Natural killer cell (primary cell): ENCODE measurements at regions of chr9 and their contacts with region 1.

Region 1: DNA sequence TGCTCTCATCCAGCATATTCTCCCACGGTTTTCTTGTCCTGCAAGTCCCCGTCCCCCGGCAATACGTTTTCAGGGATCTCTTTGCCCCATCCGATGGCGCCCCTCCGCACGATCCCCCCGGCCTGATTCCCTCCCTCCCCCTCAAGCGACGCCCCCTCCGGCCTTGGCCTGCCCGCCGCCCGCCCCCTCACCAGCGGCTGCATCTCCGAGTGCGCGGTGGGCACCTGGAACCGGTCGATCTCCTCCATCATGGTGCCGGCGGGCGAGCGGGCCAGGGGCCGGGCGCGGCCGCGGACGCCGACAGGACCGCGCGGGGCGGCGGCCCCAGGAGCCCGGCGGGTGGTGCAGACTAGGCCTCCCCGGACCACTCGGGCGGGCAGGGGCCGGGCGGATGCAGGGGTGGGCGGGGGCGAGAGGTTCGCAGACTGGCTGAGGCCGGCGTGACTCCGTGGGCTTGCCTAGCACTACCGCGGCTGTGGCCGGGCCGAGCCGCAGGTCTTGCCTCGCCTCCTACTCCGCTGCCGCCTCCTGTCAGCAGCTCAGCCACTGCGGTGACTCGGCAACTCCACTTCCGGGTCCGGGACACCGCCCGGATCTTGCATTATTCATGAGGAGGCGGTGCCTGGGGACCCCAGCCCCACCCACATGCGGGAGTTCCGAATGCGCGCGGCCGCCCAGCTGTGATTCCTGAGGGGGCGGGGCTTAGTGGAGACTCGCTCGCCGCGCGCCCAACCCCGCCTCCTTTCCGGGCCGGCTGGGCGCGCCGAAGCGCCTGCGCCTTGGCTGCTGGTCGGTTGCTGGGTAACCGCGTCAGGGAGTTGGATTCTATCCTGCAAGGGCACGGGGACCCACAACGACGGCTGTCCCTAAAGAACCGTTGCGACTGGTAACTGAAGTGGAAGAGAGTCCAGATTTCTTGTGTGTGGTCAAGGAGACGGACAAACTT is at the starts of genes DNAI1 and FAM219A:
- DNase-seq: peak; percentile 99
- ATAC-seq: peak; percentile 89 to 96 (median 92)
- H3K4me3 ChIP-seq: peak within 1 kb of the TSS; percentile 60
- H3K4me3 Mint-ChIP-seq: peak within 1 kb of the TSS; percentile 92
- H3K27ac ChIP-seq: peak within 1 kb of the TSS; percentile 27
- H3K27ac Mint-ChIP-seq: peak within 1 kb of the TSS; percentile 60 to 76
- H3K4me1 ChIP-seq: peaks cover 20% of the 10 kb centered on the region
- H3K4me1 Mint-ChIP-seq: peaks cover 30 to 46% of the 10 kb centered on the region in 2 donors
- H3K27me3 ChIP-seq: no peaks in the 10 kb centered on the region
- H3K27me3 Mint-ChIP-seq: peaks cover 0 to 14% of the 10 kb centered on the region in 2 donors
- CTCF ChIP-seq: no peak
- total RNA-seq, gene DNAI1: not detected
- total RNA-seq, gene FAM219A: 18.9 to 20.6 (median 19.2) TPM

Region 2: DNA sequence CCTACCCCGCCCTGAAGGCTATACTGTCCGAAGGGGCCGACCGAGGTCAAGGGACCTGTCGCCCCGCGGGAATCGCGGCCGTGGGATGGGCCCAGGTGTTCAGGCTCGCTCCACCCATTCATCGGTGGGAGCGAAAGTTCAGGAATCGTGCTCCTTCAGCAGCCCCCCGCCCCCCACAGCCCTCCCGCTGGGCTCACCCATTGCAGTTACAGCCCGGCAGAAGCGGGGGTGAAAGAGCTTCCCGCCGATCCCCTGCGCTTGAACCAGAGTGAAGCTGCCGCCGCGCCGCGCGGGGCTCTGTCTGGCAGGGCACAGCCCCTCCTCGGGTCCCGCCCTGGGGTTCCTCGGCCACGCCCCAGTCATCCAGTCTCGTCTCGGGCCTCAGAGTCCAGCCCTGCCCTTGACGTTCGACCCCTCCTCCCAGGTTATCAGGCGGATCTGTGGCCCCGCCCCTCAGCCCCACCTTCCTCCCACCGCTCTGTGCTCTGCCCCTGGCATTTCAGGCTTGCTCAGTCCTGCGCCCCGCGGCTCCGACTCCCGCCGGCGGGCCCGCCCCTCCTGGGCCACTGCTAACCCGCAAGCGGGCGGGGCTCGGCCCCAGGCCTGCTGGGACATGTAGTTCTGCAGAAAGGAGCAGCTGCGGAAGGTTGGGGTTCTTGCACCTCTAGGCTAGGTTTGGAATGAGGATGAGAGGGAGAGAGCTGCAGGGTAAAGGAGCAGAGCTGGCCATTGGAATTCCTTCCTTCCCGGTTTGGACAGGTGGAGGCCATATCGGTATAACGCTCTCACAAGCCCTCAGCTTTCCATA is 81.5 kb before region 1 on chr9 and contains the start of gene MYORG:
- intact Hi-C with region 1: loop called (anchors 2 kb)
- DNase-seq: peak; percentile 80 to 97
- ATAC-seq: peak; percentile 71 to 86 (median 75)
- H3K4me3 ChIP-seq: peak within 1 kb of the TSS; percentile 54
- H3K4me3 Mint-ChIP-seq: peak within 1 kb of the TSS; percentile 90
- H3K27ac ChIP-seq: peak within 1 kb of the TSS; percentile 32
- H3K27ac Mint-ChIP-seq: peak within 1 kb of the TSS; percentile 58 to 82
- H3K4me1 ChIP-seq: peaks cover 44% of the 10 kb centered on the region
- H3K4me1 Mint-ChIP-seq: peaks cover 43 to 49% of the 10 kb centered on the region in 2 donors
- H3K27me3 ChIP-seq: no peaks in the 10 kb centered on the region
- H3K27me3 Mint-ChIP-seq: peaks cover 0 to 6% of the 10 kb centered on the region in 2 donors
- CTCF ChIP-seq: no peak
- total RNA-seq, gene MYORG: 0.58 to 0.93 (median 0.92) TPM

Region 3: GRCh38 chr9:34522971-34523797 is 64.9 kb after region 1 on chr9 and contains the start of gene ENHO:
- intact Hi-C with region 1: loop called (anchors 1 kb)
- DNase-seq: peak; percentile 94 to 96
- ATAC-seq: peak; percentile 94 to 97 (median 97)
- H3K4me3 ChIP-seq: peak within 1 kb of the TSS; percentile 30
- H3K4me3 Mint-ChIP-seq: peak within 1 kb of the TSS; percentile 72
- H3K27ac ChIP-seq: no peak within 1 kb of the TSS
- H3K27ac Mint-ChIP-seq: peak within 1 kb of the TSS; percentile 16 to 82
- H3K4me1 ChIP-seq: peaks cover 17% of the 10 kb centered on the region
- H3K4me1 Mint-ChIP-seq: peaks cover 6 to 19% of the 10 kb centered on the region in 2 donors
- H3K27me3 ChIP-seq: peaks cover 3% of the 10 kb centered on the region
- H3K27me3 Mint-ChIP-seq: peaks cover 20 to 23% of the 10 kb centered on the region in 2 donors
- CTCF ChIP-seq: no peak
- total RNA-seq, gene ENHO: 0.34 to 1.7 TPM in 2 of 3 donors, not detected in the other

Region 4: DNA sequence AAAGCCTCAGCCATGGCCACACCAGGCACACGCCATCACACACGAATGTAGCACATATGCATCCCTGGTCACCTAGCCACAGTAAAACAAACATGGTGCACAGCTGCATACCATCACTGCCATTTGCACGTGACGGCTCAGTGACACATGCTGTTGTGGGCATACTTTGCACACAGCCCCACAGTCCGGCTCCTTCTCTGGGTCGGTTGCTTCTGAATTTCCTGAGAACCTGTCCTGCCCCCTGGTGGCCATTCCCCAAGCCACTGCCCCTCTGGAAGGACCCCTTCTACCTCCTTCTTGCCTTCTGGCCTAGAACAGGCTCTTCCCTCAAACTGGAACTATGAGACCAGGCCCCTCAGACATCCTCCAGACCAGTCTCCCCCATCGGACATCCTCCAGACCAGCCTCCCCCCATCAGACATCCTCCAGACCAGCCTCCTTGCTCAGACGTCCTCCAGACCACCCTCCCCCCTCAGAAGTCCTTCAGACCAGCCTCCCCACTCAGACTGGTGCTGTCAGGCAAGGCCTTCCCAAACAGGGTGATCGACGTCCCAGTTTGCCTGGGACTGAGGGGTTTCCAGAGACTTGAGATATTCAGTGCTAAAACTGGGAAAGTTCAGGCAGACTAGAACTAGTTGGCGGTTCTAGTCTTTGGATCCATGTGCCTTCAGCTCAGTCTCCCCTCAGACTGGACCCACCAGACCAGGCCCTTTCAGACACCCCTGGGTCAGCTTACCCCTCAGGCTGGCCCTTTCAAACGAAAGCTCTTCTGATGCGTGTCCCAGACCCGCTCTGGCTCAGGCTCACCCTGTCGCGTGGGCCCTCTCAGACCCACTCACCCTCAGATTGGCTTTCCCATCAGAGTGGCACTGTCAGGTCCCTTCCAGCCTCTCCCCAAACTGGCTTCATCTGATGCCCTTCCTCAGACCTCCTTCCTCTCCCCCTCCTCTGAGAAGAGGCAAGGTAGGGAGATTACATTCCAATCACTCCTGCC is 88.8 kb after region 1 on chr9:
- intact Hi-C with region 1: no loop called
- DNase-seq: peak in 1 of 2 donors; percentile 64
- ATAC-seq: peak in 2 of 3 donors; percentile 68 to 72
- H3K4me3 ChIP-seq: no peak overlapping the region
- H3K4me3 Mint-ChIP-seq: no peak overlapping the region
- H3K27ac ChIP-seq: no peak overlapping the region
- H3K27ac Mint-ChIP-seq: no peak overlapping the region
- H3K4me1 ChIP-seq: no peaks in the 10 kb centered on the region
- H3K4me1 Mint-ChIP-seq: no peaks in the 10 kb centered on the region
- H3K27me3 ChIP-seq: no peaks in the 10 kb centered on the region
- H3K27me3 Mint-ChIP-seq: peaks cover 0 to 13% of the 10 kb centered on the region in 2 donors
- CTCF ChIP-seq: peak; percentile 21

Region 5: GRCh38 chr9:34611829-34612630 is 153.7 kb after region 1 on chr9 and contains the start of gene RPP25L:
- intact Hi-C with region 1: loop called (anchors 2 kb)
- DNase-seq: peak; percentile 91 to 93
- ATAC-seq: peak; percentile 85 to 97 (median 89)
- H3K4me3 ChIP-seq: peak within 1 kb of the TSS; percentile 72
- H3K4me3 Mint-ChIP-seq: peak within 1 kb of the TSS; percentile 92
- H3K27ac ChIP-seq: peak within 1 kb of the TSS; percentile 96
- H3K27ac Mint-ChIP-seq: peak within 1 kb of the TSS; percentile 92 to 96
- H3K4me1 ChIP-seq: peaks cover 24% of the 10 kb centered on the region
- H3K4me1 Mint-ChIP-seq: peaks cover 29 to 36% of the 10 kb centered on the region in 2 donors
- H3K27me3 ChIP-seq: no peaks in the 10 kb centered on the region
- H3K27me3 Mint-ChIP-seq: no peaks in the 10 kb centered on the region
- CTCF ChIP-seq: no peak
- total RNA-seq, gene RPP25L: 9.3 to 15.0 (median 9.8) TPM

Region 6: DNA sequence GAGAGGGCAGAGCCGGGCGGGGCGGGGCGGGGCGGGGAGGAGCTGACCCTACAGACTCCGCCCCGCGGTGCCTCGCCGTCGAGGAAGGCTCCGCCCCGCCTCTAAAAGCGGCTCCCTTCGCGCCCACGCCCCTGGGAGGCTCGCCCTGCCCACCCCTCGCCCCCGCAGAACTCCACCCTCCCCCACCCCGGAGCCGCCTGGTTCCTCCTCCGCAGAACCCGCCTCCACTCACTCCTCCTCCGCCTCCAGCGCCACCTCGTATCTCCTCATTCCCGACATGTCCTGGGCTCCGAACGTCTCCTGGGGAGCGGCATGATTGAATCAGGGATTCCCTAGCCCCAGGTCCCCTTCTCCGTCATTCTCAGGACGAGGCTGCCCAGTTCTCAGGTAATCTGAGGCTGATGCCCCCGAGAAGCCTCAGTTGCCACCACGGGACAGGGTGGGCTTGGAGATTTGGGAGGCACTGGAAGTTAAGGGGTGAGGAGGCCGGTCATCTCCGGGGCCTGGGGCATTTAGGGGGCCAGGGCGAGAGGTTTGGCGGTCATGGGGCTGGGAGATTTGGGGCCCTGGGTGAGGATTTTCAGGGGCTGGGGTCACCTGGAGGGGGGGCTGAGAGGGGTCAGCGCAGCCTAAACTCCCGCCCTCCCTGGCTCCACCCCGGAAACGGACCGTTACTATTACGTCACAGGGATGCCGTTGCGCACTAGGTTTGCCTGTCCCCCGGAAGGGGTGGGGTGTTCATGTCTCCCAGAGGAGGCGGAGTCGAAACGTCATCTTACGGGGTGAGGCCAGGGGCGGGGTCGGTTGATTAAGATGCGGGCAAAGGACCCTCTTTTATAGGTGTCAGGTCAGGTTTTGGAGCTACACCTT is 207.3 kb after region 1 on chr9:
- intact Hi-C with region 1: loop called (anchors 2 kb)
- DNase-seq: peak; percentile 82 to 97
- ATAC-seq: peak; percentile 85 to 93 (median 86)
- H3K4me3 ChIP-seq: peak overlapping the region; percentile 70
- H3K4me3 Mint-ChIP-seq: peak overlapping the region; percentile 90
- H3K27ac ChIP-seq: peak overlapping the region; percentile 96
- H3K27ac Mint-ChIP-seq: peak overlapping the region; percentile 86 to 92
- H3K4me1 ChIP-seq: peaks cover 24% of the 10 kb centered on the region
- H3K4me1 Mint-ChIP-seq: peaks cover 11 to 26% of the 10 kb centered on the region in 2 donors
- H3K27me3 ChIP-seq: no peaks in the 10 kb centered on the region
- H3K27me3 Mint-ChIP-seq: no peaks in the 10 kb centered on the region
- CTCF ChIP-seq: no peak